ENCODE measurements at regions of chr15 and their contacts with region 1.

Region 1: GRCh38 chr15:100627789-100628395 is 25.5 kb downstream of the ASB7 start:
- DNase-seq: peak; percentile 80
- H3K4me3 ChIP-seq: no peak overlapping the region
- H3K27ac ChIP-seq: no peak overlapping the region
- H3K4me1 ChIP-seq: peaks cover 0 to 14% (median 3%) of the 10 kb centered on the region in 4 donors
- H3K27me3 ChIP-seq: no peaks in the 10 kb centered on the region
- CTCF ChIP-seq: peak; percentile 65 to 81 (median 74)
- EP300 ChIP-seq: no peak
- POLR2A ChIP-seq: no peak

Region 2: DNA sequence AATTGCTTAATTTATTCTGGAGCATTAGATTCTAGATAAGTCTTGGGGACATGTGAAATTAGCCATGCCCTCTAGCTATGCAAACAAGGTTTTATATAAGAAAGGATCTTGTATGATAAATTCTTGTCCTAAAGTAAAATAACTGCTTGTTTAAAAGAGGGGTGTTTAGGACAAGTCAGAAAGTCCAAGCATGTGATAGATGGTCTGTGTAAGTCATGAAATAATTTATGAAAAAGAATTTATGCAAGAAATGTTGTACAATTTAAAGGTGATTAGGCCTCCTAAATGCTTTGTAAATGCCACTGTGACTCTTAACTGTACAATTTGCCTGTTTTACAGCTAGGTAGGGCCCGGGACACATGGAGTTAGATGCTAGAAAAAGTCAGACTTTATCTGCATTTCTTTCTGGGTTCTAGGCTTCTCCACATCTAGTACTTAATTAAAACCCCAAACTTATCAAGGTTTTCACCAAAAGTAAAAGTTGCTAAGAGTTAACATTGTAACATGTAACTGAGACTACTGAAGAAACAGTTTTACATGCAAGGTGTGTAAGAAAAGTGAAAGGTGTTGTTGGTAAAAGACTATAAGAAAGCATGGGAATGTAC is 39.2 kb before region 1 on chr15:
- intact Hi-C with region 1: no loop called
- DNase-seq: no peak
- H3K4me3 ChIP-seq: no peak overlapping the region
- H3K27ac ChIP-seq: no peak overlapping the region
- H3K4me1 ChIP-seq: no peaks in the 10 kb centered on the region
- H3K27me3 ChIP-seq: no peaks in the 10 kb centered on the region
- CTCF ChIP-seq: no peak
- EP300 ChIP-seq: no peak
- POLR2A ChIP-seq: no peak

Region 3: DNA sequence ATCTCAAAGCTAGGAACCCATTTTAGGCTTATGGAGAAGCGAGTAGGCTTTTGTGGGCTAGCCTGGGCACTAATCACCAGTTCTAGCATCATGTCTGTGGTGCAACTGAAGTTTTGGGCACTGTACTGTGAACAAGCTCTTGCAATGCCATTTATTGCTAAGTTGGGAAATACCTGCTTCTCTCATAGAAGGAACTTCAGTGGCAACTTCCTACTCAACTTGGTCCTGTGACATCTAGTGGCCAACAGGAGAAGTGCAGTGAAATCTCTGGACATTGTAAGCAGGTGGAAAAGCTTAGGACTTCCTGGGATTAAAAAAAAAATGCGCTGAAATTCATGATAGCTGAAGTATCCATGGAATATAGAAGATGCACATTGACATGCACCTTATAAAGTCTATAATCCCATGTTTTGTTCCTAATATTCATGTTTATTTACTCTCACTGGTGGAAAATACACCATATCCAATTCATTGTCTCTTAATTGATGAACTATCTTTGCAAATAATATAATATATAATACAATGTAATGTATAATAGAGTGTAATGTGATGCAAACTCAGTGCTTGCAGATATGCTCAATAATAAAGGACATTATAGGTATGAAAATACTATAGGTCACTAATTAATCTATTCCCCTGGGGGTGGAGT is 245.3 kb after region 1 on chr15:
- intact Hi-C with region 1: loop called (anchors 1 kb)
- DNase-seq: peak; percentile 85
- H3K4me3 ChIP-seq: no peak overlapping the region
- H3K27ac ChIP-seq: no peak overlapping the region
- H3K4me1 ChIP-seq: no peaks in the 10 kb centered on the region
- H3K27me3 ChIP-seq: peaks cover 0 to 1% (median 0%) of the 10 kb centered on the region in 3 donors
- CTCF ChIP-seq: peak; percentile 90 to 98 (median 92)
- EP300 ChIP-seq: no peak
- POLR2A ChIP-seq: no peak

Region 4: GRCh38 chr15:100918034-100918689 is 290.3 kb after region 1 on chr15:
- intact Hi-C with region 1: loop called (anchors 5 kb)
- DNase-seq: peak; percentile 90
- H3K4me3 ChIP-seq: peak overlapping the region; percentile 61 to 87 (median 74)
- H3K27ac ChIP-seq: peak overlapping the region; percentile 65 to 77 (median 76)
- H3K4me1 ChIP-seq: peaks cover 0 to 35% (median 20%) of the 10 kb centered on the region in 4 donors
- H3K27me3 ChIP-seq: no peaks in the 10 kb centered on the region
- CTCF ChIP-seq: peak; percentile 73 to 92 (median 88)
- EP300 ChIP-seq: no peak
- POLR2A ChIP-seq: no peak